Adrenal gland (tissue), 19 donors: ENCODE measurements at regions of chr16 and their contacts with region 1.

Region 1: DNA sequence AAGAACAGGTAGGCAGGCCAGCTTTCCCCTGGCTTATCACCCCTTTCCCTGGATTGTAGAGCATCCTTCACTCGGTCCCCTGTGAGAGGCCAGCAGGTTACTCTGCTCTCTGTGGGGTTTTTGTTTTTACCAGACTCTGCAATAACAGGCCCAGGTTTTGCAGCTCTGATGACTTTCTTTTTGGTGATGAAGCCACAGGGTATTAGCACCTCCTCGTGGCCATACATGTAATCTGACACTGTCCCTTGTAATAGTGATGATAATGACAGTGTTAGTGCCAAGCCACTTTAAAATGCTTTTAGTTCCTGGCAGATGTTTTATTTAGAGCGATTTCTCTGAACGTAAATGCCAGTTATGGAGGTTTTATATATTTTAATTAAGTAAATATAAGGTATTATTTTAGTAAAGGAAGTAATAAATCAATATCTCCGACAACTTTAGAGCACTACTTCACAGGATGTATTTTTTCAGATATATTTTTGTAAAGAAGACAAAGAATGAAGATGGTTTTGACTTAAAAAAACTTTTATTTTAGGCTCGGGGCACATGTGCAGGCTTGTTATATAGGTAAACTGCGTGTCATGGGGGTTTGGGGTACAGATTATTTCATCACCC is 38.0 kb upstream of the CPHXL start:
- DNase-seq: peak; percentile 40 to 81 (median 50)
- H3K4me3 ChIP-seq: no peak overlapping the region
- H3K27ac ChIP-seq: no peak overlapping the region
- H3K4me1 ChIP-seq: no peaks in the 10 kb centered on the region
- H3K27me3 ChIP-seq: no peaks in the 10 kb centered on the region
- CTCF ChIP-seq: peak; percentile 52 to 85 (median 80)
- POLR2A ChIP-seq: no peak

Region 2: GRCh38 chr16:75534560-75535205 is 229.6 kb before region 1 on chr16:
- intact Hi-C with region 1: no loop called
- DNase-seq: no peak
- H3K4me3 ChIP-seq: no peak overlapping the region
- H3K27ac ChIP-seq: no peak overlapping the region
- H3K4me1 ChIP-seq: no peaks in the 10 kb centered on the region
- H3K27me3 ChIP-seq: no peaks in the 10 kb centered on the region
- CTCF ChIP-seq: no peak
- POLR2A ChIP-seq: no peak

Region 3: GRCh38 chr16:75653922-75654321 is 110.3 kb before region 1 on chr16:
- intact Hi-C with region 1: loop called in 1 of 2 experiments (anchors 10 kb)
- DNase-seq: no peak
- H3K4me3 ChIP-seq: no peak overlapping the region
- H3K27ac ChIP-seq: no peak overlapping the region
- H3K4me1 ChIP-seq: peaks cover 23 to 57% of the 10 kb centered on the region in 2 donors
- H3K27me3 ChIP-seq: no peaks in the 10 kb centered on the region
- CTCF ChIP-seq: no peak
- POLR2A ChIP-seq: no peak